Activated CD4-positive, alpha-beta T cell treated with anti-CD3 and anti-CD28 coated beads for 36 hours (primary cell): ENCODE measurements at regions of chr12 and their contacts with region 1.

Region 1: GRCh38 chr12:89019408-89020120 is 332.7 kb downstream of the DUSP6 start:
- DNase-seq: peak; percentile 82
- ATAC-seq: peak; percentile 88
- H3K4me3 Mint-ChIP-seq: no peak overlapping the region
- H3K27ac Mint-ChIP-seq: no peak overlapping the region
- H3K4me1 Mint-ChIP-seq: peaks cover 16% of the 10 kb centered on the region
- H3K27me3 Mint-ChIP-seq: peaks cover 4% of the 10 kb centered on the region

Region 2: DNA sequence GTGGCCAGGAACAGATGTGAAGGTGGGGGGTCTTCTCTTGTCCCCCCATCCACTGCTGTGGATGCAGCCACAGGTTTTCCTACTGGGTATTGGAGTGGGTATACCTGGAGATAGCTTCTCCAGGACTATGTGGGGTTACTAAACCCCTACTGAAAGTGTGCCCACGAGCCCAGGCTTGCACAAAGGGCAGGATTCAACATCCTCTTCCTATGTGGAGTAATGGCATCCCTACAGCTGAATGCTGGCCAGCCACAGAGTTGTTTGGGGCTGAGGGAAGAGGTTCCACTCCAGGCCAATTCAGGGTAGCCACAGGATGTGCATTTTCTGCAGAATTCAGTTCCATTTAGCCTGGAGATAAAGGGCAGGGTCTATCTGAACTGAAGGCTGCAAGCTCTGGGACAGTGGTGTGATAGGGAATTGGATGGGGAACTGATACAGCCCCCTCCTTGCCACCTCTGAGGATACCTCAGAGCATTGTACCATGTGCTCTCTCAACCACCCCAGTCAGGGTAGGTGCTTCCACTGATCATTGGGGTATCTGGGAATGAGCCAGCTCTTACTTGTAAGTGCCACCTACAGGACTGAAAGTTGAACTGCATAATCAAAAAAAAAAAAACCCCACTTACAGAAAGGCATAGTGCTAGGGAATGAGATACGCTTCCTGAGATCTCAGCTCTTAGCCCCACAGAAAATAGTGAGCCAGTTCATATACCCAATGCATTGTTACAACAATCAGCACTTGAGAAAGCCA is 626.4 kb before region 1 on chr12:
- CTCF ChIA-PET with region 1: no interaction called
- POLR2A ChIA-PET with region 1: interaction called, 11 read pairs
- intact Hi-C with region 1: no loop called
- DNase-seq: no peak
- ATAC-seq: peak; percentile 37
- H3K4me3 Mint-ChIP-seq: no peak overlapping the region
- H3K27ac Mint-ChIP-seq: no peak overlapping the region
- H3K4me1 Mint-ChIP-seq: peaks cover 11% of the 10 kb centered on the region
- H3K27me3 Mint-ChIP-seq: peaks cover 11% of the 10 kb centered on the region

Region 3: GRCh38 chr12:89092297-89092696 is 72.7 kb after region 1 on chr12:
- CTCF ChIA-PET with region 1: no interaction called
- POLR2A ChIA-PET with region 1: no interaction called
- intact Hi-C with region 1: loop called in 1 of 2 experiments (anchors 2 kb)
- DNase-seq: peak; percentile 53
- ATAC-seq: peak; percentile 90
- H3K4me3 Mint-ChIP-seq: no peak overlapping the region
- H3K27ac Mint-ChIP-seq: peak overlapping the region; percentile 85
- H3K4me1 Mint-ChIP-seq: peaks cover 27% of the 10 kb centered on the region
- H3K27me3 Mint-ChIP-seq: no peaks in the 10 kb centered on the region

Region 4: DNA sequence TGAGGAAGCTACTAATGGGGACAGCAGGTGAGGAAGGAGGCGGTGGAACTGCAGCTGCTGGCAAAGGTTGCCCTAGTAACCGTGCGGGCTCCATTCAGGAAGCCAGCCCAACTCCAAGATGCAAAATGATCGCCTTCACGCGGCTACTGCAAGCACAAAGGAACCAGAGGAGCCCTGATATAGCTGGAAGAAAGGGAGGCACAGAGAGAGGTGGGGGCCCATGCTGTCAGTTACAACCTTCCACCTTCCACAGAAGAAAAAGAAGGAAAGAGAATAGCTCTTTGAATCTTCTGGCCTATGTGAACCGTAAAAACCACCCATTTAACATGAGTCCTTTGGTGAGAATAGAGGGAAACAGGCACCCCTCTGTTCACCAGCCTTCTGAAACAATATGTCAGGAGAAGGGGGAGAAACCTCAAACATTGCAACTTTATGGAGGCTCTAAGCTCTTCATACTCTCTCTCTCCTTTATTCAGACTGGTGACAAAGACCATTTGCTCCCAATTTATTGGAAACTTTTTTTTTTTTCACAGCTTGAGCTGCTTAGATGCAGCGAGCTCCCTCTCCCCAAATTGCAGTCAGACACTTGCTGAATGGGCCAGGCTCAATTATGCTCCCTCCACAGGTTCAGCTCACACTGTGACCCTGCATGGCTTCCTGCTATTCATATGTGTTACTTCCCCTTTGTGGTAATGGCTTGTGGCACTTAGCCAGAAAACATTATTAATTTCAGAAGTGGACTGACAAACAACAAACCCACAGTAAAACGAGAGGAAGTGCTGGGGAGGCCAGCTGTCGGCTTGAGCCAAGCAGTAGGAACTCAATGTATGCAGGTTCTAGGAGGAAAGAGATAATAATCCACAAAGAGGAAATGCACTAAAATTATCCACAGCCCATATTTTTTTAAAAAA is 326.5 kb after region 1 on chr12:
- CTCF ChIA-PET with region 1: interaction called, 7 read pairs
- POLR2A ChIA-PET with region 1: interaction called, 4 read pairs
- intact Hi-C with region 1: loop called (anchors 2 kb)
- DNase-seq: peak; percentile 60
- ATAC-seq: peak; percentile 80
- H3K4me3 Mint-ChIP-seq: peak overlapping the region; percentile 51
- H3K27ac Mint-ChIP-seq: peak overlapping the region; percentile 82
- H3K4me1 Mint-ChIP-seq: peaks cover 55% of the 10 kb centered on the region
- H3K27me3 Mint-ChIP-seq: peaks cover 2% of the 10 kb centered on the region

Region 5: DNA sequence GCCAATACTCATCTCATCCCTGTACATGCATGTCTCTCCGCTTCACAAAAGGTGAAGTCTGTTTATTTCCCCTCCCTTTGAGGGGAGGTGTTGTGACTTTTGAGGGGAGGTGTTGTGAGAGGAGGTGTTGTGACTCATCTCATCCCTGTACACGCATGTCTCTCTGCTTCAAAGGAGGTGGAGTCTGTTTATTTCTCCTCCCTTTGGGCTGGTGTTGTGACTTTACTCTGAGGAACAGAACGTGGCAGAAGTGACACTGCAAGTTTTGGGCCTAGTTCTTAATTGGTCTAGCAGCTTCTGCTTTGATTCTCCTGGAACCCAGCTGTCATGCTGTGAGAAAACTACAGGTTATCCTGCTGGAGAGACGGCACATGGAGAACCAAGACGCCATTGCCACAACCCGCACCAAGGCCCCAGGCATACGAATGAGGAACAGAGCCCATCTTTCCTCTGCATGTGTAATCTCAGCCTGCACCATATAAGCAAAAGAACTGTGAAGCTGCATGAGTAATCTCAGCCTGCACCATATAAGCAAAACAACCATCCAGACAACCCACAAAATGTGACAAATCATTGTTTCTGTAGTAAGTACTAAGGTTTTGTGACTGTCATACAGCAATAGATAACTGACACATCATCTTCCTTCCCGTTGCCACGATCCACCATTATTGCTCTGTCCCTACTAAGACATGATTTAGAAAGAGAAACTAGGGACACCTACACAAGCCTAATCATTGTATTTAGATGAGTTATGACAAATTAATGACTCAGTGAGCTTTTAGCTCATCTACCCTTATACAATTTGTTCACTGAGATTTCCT is 475.1 kb after region 1 on chr12:
- CTCF ChIA-PET with region 1: interaction called, 3 read pairs
- POLR2A ChIA-PET with region 1: no interaction called
- intact Hi-C with region 1: loop called in 1 of 2 experiments (anchors 1 kb)
- DNase-seq: peak; percentile 72
- ATAC-seq: peak; percentile 90
- H3K4me3 Mint-ChIP-seq: peak overlapping the region; percentile 28
- H3K27ac Mint-ChIP-seq: peak overlapping the region; percentile 92
- H3K4me1 Mint-ChIP-seq: peaks cover 27% of the 10 kb centered on the region
- H3K27me3 Mint-ChIP-seq: no peaks in the 10 kb centered on the region

Region 6: GRCh38 chr12:89709157-89709994 is 689.8 kb after region 1 on chr12:
- CTCF ChIA-PET with region 1: no interaction called
- POLR2A ChIA-PET with region 1: no interaction called
- intact Hi-C with region 1: loop called in 1 of 2 experiments (anchors 5 kb)
- DNase-seq: peak; percentile 99
- ATAC-seq: peak; percentile 81
- H3K4me3 Mint-ChIP-seq: peak overlapping the region; percentile 79
- H3K27ac Mint-ChIP-seq: peak overlapping the region; percentile 84
- H3K4me1 Mint-ChIP-seq: peaks cover 30% of the 10 kb centered on the region
- H3K27me3 Mint-ChIP-seq: no peaks in the 10 kb centered on the region

Region 7: GRCh38 chr12:90940872-90941499 is 1921.4 kb after region 1 on chr12:
- CTCF ChIA-PET with region 1: interaction called, 3 read pairs
- POLR2A ChIA-PET with region 1: no interaction called
- intact Hi-C with region 1: loop called in 1 of 2 experiments (anchors 5 kb)
- DNase-seq: no peak
- ATAC-seq: no peak
- H3K4me3 Mint-ChIP-seq: no peak overlapping the region
- H3K27ac Mint-ChIP-seq: no peak overlapping the region
- H3K4me1 Mint-ChIP-seq: no peaks in the 10 kb centered on the region
- H3K27me3 Mint-ChIP-seq: peaks cover 4% of the 10 kb centered on the region